Posterior vena cava (tissue), 2 donors: ENCODE measurements at regions of chr1 and their contacts with region 1.

Region 1: DNA sequence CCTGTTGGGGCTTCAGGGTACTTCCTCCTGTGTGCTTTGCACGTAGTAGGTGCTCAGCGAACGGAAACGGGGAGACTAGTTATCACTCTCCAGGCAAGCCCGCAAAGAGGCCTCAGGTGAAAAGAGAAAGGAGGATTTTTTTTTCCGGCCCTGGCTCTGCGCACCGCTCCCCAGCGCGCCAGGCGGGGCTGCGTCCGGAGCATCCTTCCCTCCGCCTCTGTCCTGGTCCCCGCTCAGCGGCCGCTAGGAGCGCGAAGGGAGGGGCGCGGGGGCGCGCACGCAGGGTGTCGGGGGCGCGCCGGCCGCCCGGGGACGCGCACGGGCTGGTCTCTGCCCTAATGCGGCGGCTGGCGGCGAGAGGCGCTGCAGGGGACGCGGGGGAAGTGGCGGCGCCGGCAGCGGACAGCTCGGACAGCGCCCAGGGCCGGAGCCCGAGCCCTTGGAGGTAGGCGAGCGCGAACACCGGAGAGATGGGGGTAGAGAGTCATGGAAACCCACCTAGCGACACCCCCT is 42.3 kb upstream of the NFASC start:
- DNase-seq: peak; percentile 83

Region 2: DNA sequence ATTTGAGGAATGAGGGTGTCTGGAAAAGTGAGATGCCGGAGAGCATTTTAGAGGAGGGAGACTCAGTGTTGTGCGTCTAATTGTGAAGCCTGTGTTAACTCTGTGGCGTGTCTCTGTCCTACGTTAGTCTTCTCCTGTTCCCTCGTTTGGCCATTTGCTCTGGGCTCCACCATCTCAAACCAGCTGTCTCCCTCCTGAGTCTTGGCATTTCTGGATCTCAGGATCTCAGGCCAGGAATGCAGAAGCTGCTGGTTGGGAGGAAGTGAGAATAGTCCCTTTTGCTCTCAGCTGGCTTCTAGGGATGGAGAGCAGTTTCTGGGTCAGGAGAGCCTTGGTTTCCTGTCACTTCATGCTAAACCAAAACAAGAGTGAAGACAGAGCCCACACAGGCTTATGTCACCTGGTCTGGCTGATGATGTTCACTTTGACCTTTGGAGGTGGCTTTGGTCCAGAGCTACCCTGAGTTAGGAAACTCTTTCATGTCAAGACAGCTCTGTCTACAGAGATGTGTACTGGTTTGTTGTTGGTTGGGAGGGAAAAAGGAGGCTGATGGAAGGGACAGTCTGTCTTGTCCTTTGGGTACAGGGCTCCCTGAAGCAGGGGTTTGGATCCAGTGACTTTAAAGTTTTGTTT is 43.1 kb after region 1 on chr1:
- intact Hi-C with region 1: loop called in 1 of 2 experiments (anchors 1 kb)
- DNase-seq: no peak

Region 3: GRCh38 chr1:204885288-204885711 is 56.9 kb after region 1 on chr1:
- intact Hi-C with region 1: loop called in 1 of 2 experiments (anchors 5 kb)
- DNase-seq: no peak

Region 4: DNA sequence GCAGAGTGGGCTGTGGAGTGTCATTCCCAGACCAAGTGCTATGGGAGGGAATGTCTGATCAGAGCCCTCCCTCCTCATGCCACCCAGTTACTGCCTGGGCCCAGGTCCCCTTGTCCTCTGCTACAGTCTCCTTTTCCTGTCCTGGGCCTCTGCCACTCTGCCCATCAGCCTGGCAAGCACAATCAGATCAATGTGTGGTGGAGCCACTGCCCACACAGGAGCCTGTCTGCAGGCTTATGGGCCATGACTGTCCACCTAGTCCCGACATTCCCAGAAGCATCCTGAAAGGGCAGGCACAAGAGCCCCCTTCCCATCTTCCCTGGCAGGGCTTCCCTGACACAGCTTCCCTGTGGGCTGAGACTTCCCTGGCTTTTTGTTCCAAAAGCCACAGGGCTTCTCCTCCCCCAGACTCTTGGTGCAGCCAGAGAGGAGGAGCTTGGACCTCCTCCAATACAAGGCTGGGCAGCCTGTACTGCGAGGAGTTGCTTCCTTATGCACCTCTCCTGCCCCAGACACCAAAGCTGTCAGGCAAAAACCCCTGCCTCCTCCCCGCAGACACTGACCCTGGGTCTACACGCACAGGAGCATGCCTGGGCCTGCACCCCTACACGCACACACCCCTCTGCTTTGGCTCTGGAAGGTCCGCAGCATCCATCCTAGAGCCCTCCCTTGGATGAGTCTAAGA is 185.4 kb after region 1 on chr1:
- intact Hi-C with region 1: no loop called
- DNase-seq: no peak